Posterior vena cava (tissue), 2 donors: ENCODE measurements at regions of chr3 and their contacts with region 1.

Region 1: GRCh38 chr3:111668912-111669488 is 73.9 kb upstream of the ZBED2 start:
- DNase-seq: no peak

Region 2: GRCh38 chr3:111963424-111963823 is 294.4 kb after region 1 on chr3:
- intact Hi-C with region 1: no loop called
- DNase-seq: no peak

Region 3: GRCh38 chr3:112013058-112013783 is 344.2 kb after region 1 on chr3:
- intact Hi-C with region 1: loop called in 1 of 2 experiments (anchors 2 kb)
- DNase-seq: peak; percentile 87